Cardiac septum (tissue), 1 donor: ENCODE measurements at regions of chr13 and their contacts with region 1.

Region 1: GRCh38 chr13:97802213-97802612 is 151.3 kb upstream of the IPO5 start:
- DNase-seq: no peak

Region 2: DNA sequence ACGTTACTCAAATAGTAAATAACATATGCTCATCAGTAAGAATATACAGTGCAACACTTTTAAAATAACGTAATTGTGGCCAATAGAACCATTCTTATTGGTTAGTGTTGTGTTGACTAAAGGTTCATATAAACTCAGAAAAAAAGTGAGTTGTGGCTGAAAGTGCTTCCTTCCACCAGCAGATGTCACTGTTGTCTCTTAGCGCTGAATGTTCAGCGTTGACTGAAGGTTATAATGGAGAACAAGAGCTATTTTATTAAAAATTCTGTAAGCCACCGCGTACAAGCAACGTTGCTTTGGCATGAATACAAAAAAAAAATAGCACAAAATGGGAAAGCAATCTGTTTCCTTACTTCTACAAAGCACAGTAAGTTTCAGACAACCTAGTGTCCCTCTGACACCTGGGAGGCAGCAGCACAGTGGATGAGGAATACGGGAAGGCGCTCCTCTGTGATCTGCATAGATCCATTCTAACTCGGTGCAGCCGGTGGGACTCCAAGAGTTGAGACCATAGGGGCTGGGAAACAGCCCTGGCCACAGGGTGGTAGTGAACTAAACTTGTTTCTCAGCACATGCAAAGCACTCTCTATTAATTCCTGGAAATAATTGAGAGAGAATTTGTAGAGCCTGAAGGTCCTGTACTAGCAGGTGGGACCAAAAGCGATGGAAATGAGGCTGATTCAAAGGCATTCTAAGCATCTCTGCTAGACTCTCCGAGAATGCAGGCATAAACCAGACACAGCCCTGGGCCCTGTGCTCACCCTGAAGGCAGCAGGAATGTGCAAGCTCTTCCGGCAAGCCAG is 784.0 kb before region 1 on chr13:
- intact Hi-C with region 1: loop called (anchors 5 kb)
- DNase-seq: no peak